ENCODE measurements at regions of chr19 and their contacts with region 1.

Region 1: GRCh38 chr19:6021878-6022569 is 44.1 kb upstream of the RANBP3 start:
- DNase-seq: peak; percentile 39 to 60 (median 55)
- H3K4me3 ChIP-seq: no peak overlapping the region
- H3K4me3 Mint-ChIP-seq: no peak overlapping the region
- H3K27ac ChIP-seq: no peak overlapping the region
- H3K27ac Mint-ChIP-seq: peak overlapping the region in 2 of 7 donors; percentile 33 to 60
- H3K4me1 ChIP-seq: no peaks in the 10 kb centered on the region
- H3K4me1 Mint-ChIP-seq: peaks cover 5% of the 10 kb centered on the region
- H3K27me3 ChIP-seq: no peaks in the 10 kb centered on the region
- H3K27me3 Mint-ChIP-seq: peaks cover 0 to 4% (median 0%) of the 10 kb centered on the region in 3 donors
- CTCF ChIP-seq: peak; percentile 77

Region 2: DNA sequence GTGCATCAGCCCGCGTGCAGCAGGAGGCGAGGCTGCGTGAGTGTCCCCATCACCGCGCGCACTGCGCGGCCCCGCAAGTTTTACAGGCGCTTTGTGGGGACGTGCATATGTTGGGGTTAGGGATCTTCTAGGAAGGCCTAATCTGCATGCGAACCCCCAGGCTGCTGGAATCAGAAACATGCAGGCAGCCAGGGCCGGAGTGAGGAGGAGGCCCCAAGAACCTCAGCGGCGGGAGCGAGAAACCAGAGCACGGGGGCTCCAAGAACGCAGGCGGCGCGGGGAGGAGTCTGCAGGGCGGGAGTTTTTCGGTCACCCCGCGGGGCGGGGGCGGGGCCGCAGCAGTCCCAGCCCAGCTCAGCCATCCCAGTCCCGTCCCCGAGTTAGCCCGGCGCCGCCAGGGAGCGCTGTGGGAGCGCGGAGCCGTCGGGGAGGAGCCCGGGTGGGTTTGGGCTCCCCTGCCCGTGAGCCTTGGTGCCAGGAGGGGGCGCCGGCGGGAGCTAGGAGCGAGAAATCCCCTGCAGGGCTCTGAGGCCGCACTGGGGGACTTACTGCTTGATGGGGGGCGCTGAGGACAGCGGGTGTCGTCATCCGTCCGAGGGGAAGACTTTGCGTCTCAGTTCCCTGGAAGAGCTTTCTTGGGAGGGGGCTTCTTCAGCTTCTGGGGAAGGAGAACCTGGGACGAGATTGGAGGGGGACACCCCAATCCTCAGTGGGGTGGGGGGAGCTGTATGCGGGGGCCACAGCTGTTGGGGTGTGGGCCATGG is 218.1 kb before region 1 on chr19:
- intact Hi-C with region 1: loop called (anchors 5 to 10 kb)
- DNase-seq: peak; percentile 69 to 85 (median 80)
- H3K4me3 ChIP-seq: peak overlapping the region in 2 of 3 experiments; percentile 27 to 67
- H3K4me3 Mint-ChIP-seq: peak overlapping the region; percentile 60 to 86
- H3K27ac ChIP-seq: no peak overlapping the region
- H3K27ac Mint-ChIP-seq: peak overlapping the region in 2 of 7 donors; percentile 63 to 65
- H3K4me1 ChIP-seq: peaks cover 15 to 16% of the 10 kb centered on the region in 2 donors
- H3K4me1 Mint-ChIP-seq: peaks cover 24% of the 10 kb centered on the region
- H3K27me3 ChIP-seq: peaks cover 10 to 55% of the 10 kb centered on the region in 2 donors
- H3K27me3 Mint-ChIP-seq: peaks cover 63 to 82% (median 74%) of the 10 kb centered on the region in 3 donors
- CTCF ChIP-seq: peak; percentile 95

Region 3: GRCh38 chr19:5987077-5987818 is 34.8 kb before region 1 on chr19:
- intact Hi-C with region 1: loop called (anchors 2 to 5 kb)
- DNase-seq: peak; percentile 56 to 77 (median 65)
- H3K4me3 ChIP-seq: peak overlapping the region; percentile 40 to 77 (median 53)
- H3K4me3 Mint-ChIP-seq: peak overlapping the region; percentile 83 to 92
- H3K27ac ChIP-seq: peak overlapping the region in 1 of 2 donors; percentile 47
- H3K27ac Mint-ChIP-seq: peak overlapping the region in 3 of 7 donors; percentile 12 to 70 (median 14)
- H3K4me1 ChIP-seq: peaks cover 17 to 23% of the 10 kb centered on the region in 2 donors
- H3K4me1 Mint-ChIP-seq: peaks cover 31% of the 10 kb centered on the region
- H3K27me3 ChIP-seq: no peaks in the 10 kb centered on the region
- H3K27me3 Mint-ChIP-seq: peaks cover 0 to 2% (median 0%) of the 10 kb centered on the region in 3 donors
- CTCF ChIP-seq: peak; percentile 86

Region 4: GRCh38 chr19:6076675-6077463 is 54.8 kb after region 1 on chr19:
- intact Hi-C with region 1: no loop called
- DNase-seq: peak; percentile 82 to 92 (median 85)
- H3K4me3 ChIP-seq: peak overlapping the region in 1 of 3 experiments; percentile 52
- H3K4me3 Mint-ChIP-seq: peak overlapping the region; percentile 28 to 80
- H3K27ac ChIP-seq: peak overlapping the region; percentile 45 to 65
- H3K27ac Mint-ChIP-seq: peak overlapping the region; percentile 58 to 88 (median 70)
- H3K4me1 ChIP-seq: peaks cover 13 to 17% of the 10 kb centered on the region in 2 donors
- H3K4me1 Mint-ChIP-seq: peaks cover 22% of the 10 kb centered on the region
- H3K27me3 ChIP-seq: no peaks in the 10 kb centered on the region
- H3K27me3 Mint-ChIP-seq: peaks cover 0 to 7% (median 0%) of the 10 kb centered on the region in 3 donors
- CTCF ChIP-seq: no peak

Region 5: GRCh38 chr19:6218491-6219162 is 196.6 kb after region 1 on chr19:
- intact Hi-C with region 1: no loop called
- DNase-seq: peak; percentile 59 to 77 (median 74)
- H3K4me3 ChIP-seq: no peak overlapping the region
- H3K4me3 Mint-ChIP-seq: no peak overlapping the region
- H3K27ac ChIP-seq: no peak overlapping the region
- H3K27ac Mint-ChIP-seq: peak overlapping the region in 3 of 7 donors; percentile 1 to 69 (median 32)
- H3K4me1 ChIP-seq: no peaks in the 10 kb centered on the region
- H3K4me1 Mint-ChIP-seq: peaks cover 4% of the 10 kb centered on the region
- H3K27me3 ChIP-seq: no peaks in the 10 kb centered on the region
- H3K27me3 Mint-ChIP-seq: peaks cover 0 to 3% (median 0%) of the 10 kb centered on the region in 3 donors
- CTCF ChIP-seq: peak; percentile 98